Breast epithelium (tissue), 4 donors: ENCODE measurements at regions of chr4 and their contacts with region 1.

Region 1: DNA sequence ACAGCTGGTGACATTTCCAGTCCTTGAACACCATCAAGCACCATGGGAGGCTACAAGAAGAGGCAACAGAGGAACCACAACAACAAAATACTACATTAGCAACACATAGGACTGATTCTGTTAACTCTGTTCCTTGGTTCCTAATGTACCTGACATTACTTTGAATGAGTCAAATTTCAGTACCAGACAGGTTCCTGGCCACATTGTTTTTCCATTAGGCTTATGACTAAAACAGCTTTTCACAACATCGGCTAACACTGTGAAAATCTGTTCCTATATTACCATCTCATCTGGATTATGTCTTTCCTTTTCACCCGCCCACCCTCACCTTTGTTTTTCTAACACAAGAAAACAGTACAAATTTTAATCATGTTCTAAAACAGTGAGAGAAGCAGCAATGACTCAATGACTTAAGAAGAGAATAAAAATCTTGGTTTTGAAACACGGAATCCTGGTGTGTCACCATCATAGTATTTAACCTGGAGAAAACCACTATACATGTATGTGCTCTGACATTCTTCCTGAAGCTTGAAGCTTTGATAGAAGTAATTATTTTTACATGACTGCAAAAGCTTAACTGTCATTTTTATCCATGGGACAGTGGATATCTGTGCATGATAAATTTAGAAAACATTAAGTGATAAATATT is 143.9 kb downstream of the SCFD2 start:
- DNase-seq: no peak
- H3K4me3 ChIP-seq: no peak overlapping the region
- H3K27ac ChIP-seq: no peak overlapping the region
- H3K4me1 ChIP-seq: no peaks in the 10 kb centered on the region
- H3K27me3 ChIP-seq: no peaks in the 10 kb centered on the region
- CTCF ChIP-seq: no peak
- POLR2A ChIP-seq: no peak

Region 2: DNA sequence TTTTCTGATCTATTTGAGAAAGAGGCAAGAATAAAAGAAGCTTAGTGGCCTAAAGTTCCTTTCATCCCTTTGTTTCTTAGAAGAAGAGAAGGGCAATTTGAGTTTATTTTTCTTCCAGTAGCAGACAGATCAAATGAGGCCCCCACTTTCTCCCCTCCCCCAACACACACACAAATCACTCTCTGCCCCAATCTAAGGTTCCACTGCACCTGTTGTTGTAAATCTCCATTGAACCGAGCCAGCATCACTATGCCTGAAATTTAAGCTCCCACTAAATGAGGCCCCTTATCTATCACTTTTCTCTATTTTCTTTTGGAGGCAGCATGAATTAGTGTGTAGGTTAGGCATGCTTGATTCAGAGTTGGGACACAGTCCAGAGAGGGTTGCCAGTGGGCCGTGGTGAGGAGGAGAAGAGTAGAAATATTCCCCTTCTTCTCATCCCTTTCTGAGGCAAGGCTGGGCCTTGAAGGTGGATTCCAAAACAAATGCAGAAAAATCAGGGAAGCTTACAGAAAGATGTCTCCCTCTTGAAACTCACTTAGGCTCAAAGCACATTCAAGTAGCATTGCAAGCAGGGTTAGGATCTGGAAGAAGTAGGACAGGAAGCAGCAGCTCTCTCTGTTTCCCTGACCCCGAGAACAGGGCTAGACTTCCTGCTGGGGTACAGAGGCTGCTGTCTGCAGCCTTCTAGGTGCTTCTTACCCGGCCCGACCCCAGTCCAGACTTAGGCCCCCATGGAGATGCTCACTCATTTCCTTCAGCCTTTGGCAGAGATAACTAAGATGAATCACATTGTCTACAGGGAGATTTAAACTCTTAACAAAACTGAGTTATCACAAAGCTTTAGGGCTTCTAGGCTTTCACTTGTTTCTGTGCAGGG is 289.1 kb before region 1 on chr4:
- intact Hi-C with region 1: no loop called
- DNase-seq: no peak
- H3K4me3 ChIP-seq: no peak overlapping the region
- H3K27ac ChIP-seq: no peak overlapping the region
- H3K4me1 ChIP-seq: no peaks in the 10 kb centered on the region
- H3K27me3 ChIP-seq: no peaks in the 10 kb centered on the region
- CTCF ChIP-seq: no peak
- POLR2A ChIP-seq: no peak

Region 3: DNA sequence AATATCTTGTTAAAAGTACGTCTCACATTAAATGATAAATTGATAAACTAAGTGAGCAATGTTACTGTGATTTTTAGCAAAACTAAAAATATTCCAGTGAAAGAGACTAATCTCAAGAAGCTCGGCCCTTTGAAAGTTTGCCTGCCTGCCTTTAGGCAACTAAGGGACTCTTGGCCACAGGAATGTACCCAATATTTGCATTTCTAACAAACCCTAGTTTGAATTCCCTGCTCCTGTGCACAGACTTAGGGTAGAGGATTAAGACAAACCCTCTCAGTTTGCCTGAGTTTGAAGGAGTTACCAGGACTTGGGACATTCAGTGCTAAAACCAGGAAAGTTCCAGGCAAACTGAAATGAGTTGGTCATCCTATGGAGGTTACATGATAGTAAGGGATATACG is 13.2 kb before region 1 on chr4:
- intact Hi-C with region 1: loop called (anchors 1 kb)
- DNase-seq: no peak
- H3K4me3 ChIP-seq: no peak overlapping the region
- H3K27ac ChIP-seq: no peak overlapping the region
- H3K4me1 ChIP-seq: no peaks in the 10 kb centered on the region
- H3K27me3 ChIP-seq: no peaks in the 10 kb centered on the region
- CTCF ChIP-seq: no peak
- POLR2A ChIP-seq: no peak